ENCODE measurements at regions of chr3 and their contacts with region 1.

Region 1: DNA sequence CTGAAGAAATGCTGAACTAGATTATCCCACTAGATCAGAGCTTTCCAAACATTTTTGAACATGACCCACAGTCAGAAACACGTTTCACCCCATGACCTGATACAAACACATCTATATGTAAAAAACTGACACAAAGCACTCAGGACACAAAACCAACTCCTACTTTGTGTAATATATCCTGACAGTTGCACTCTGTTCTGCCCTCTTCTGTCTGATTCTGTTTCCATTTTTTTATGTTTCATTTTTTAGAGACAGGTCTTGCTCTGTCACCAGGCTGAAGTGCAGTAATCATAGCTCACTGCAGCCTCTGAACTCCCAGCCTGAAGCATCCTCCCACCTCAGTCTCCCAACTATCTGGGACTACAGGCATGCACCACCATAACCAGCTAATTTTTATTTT is 15.8 kb upstream of the RFTN1 start:
- DNase-seq: no peak
- H3K4me3 Mint-ChIP-seq: no peak overlapping the region
- H3K27ac Mint-ChIP-seq: no peak overlapping the region
- H3K4me1 Mint-ChIP-seq: peaks cover 9% of the 10 kb centered on the region
- H3K27me3 Mint-ChIP-seq: no peaks in the 10 kb centered on the region

Region 2: GRCh38 chr3:16270855-16271254 is 258.4 kb before region 1 on chr3:
- CTCF ChIA-PET with region 1: interaction called, 3 read pairs
- intact Hi-C with region 1: loop called (anchors 1 kb)
- DNase-seq: no peak
- H3K4me3 Mint-ChIP-seq: no peak overlapping the region
- H3K27ac Mint-ChIP-seq: no peak overlapping the region
- H3K4me1 Mint-ChIP-seq: peaks cover 26% of the 10 kb centered on the region
- H3K27me3 Mint-ChIP-seq: no peaks in the 10 kb centered on the region

Region 3: GRCh38 chr3:16982460-16982859 is 453.2 kb after region 1 on chr3:
- CTCF ChIA-PET with region 1: no interaction called
- intact Hi-C with region 1: no loop called
- DNase-seq: no peak
- H3K4me3 Mint-ChIP-seq: no peak overlapping the region
- H3K27ac Mint-ChIP-seq: no peak overlapping the region
- H3K4me1 Mint-ChIP-seq: peaks cover 26% of the 10 kb centered on the region
- H3K27me3 Mint-ChIP-seq: no peaks in the 10 kb centered on the region

Measured in activated naive CD4-positive, alpha-beta T cell treated with anti-CD3 and anti-CD28 coated beads for 36 hours (primary cell).